PC-9 (cell line): ENCODE measurements at regions of chr2 and their contacts with region 1.

Region 1: GRCh38 chr2:45930396-45930792 is 278.9 kb downstream of the PRKCE start:
- DNase-seq: no peak
- H3K4me3 ChIP-seq: no peak overlapping the region
- H3K27ac ChIP-seq: no peak overlapping the region
- H3K4me1 ChIP-seq: 0 out of 2 replicates have a peak, but pooled peaks cover 1% of the 10 kb centered on the region
- H3K27me3 ChIP-seq: no peaks in the 10 kb centered on the region
- CTCF ChIP-seq: no peak

Region 2: GRCh38 chr2:45794134-45794617 is 136.2 kb before region 1 on chr2:
- CTCF ChIA-PET with region 1: no interaction called
- POLR2A ChIA-PET with region 1: no interaction called
- intact Hi-C with region 1: no loop called
- DNase-seq: no peak
- H3K4me3 ChIP-seq: no peak overlapping the region
- H3K27ac ChIP-seq: no peak overlapping the region
- H3K4me1 ChIP-seq: no peaks in the 10 kb centered on the region
- H3K27me3 ChIP-seq: no peaks in the 10 kb centered on the region
- CTCF ChIP-seq: no peak

Region 3: GRCh38 chr2:45909663-45910191 is 20.7 kb before region 1 on chr2:
- CTCF ChIA-PET with region 1: interaction called, 14 read pairs
- POLR2A ChIA-PET with region 1: no interaction called
- intact Hi-C with region 1: no loop called
- DNase-seq: peak; percentile 83 to 95
- H3K4me3 ChIP-seq: no peak overlapping the region
- H3K27ac ChIP-seq: no peak overlapping the region
- H3K4me1 ChIP-seq: peaks cover 19% of the 10 kb centered on the region
- H3K27me3 ChIP-seq: no peaks in the 10 kb centered on the region
- CTCF ChIP-seq: no peak

Region 4: GRCh38 chr2:46134531-46135181 is 204.3 kb after region 1 on chr2:
- CTCF ChIA-PET with region 1: no interaction called
- POLR2A ChIA-PET with region 1: no interaction called
- intact Hi-C with region 1: no loop called
- DNase-seq: peak in 1 of 2 experiments; percentile 14
- H3K4me3 ChIP-seq: no peak overlapping the region
- H3K27ac ChIP-seq: no peak overlapping the region
- H3K4me1 ChIP-seq: no peaks in the 10 kb centered on the region
- H3K27me3 ChIP-seq: no peaks in the 10 kb centered on the region
- CTCF ChIP-seq: no peak